ENCODE measurements at regions of chr1 and their contacts with region 1.

Region 1: DNA sequence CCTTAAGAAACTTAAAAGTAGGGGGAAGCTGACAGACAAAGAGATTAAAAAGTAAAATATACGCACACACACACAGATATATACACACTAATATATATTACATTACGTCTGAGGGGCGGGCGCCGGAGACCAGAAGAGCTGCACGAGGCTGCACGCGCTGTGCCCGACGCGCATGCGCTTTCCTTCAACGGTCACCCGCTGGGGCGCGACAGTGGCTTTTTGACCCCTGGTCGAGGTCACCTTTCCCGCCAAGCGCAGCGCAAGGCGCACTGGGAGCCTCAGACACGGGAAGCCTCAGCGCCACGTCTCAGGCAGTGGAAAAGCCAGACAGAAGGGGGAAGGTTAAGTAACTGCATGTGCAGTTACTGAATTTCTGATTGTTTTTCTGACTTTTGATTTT is at the start of gene HORMAD1:
- DNase-seq: no peak
- H3K4me3 ChIP-seq: no peak within 1 kb of the TSS
- H3K27ac ChIP-seq: no peak within 1 kb of the TSS
- H3K4me1 ChIP-seq: no peaks in the 10 kb centered on the region
- H3K27me3 ChIP-seq: no peaks in the 10 kb centered on the region
- CTCF ChIP-seq: no peak
- total RNA-seq, gene HORMAD1: not detected

Region 2: DNA sequence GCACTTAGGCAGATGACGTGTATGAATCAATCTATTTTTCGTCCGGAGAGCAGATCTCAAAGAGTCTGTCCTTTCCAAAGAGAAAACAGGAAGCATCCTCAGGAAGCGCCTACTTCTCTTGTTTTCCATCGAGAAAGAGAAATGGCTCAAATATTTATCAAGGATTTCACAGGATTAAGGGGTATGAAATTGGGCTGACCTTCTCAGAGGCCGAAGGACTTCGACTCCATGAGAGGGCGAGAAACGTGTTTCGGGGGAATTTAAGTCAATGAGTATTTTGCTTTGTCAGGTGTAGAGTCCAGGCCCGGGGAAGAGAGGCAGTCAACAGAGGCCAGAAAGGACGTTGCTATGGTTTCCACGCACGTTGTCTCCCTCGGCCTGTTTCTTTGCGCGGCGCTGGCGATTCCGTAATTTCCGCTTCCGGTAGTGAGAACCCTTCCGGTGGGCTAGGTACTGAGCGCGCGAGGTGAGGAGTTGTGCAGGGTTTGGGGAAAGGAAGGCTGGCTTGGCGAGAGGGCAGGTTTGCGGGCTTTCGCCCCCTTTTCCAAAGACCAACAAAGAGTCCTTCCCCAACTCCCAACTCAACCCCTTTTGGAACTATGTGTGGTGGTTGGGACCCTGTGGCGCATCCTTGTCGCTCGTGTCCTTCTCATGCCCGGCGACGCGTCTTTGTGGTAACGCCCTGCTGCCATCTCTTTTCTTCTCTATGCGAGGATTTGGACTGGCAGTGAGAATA is 427.1 kb before region 1 on chr1 and contains the start of gene MRPS21:
- CTCF ChIA-PET with region 1: no interaction called
- dilution Hi-C with region 1: no loop called
- in situ Hi-C with region 1: no loop called
- intact Hi-C with region 1: no loop called
- DNase-seq: peak; percentile 82
- H3K4me3 ChIP-seq: peak within 1 kb of the TSS; percentile 76 to 88 (median 81)
- H3K27ac ChIP-seq: peak within 1 kb of the TSS; percentile 95
- H3K4me1 ChIP-seq: peaks cover 4% of the 10 kb centered on the region
- H3K27me3 ChIP-seq: no peaks in the 10 kb centered on the region
- CTCF ChIP-seq: no peak
- total RNA-seq, gene MRPS21: 27.3 to 84.8 TPM

Region 3: GRCh38 chr1:150649441-150650075 is 71.1 kb before region 1 on chr1:
- CTCF ChIA-PET with region 1: no interaction called
- dilution Hi-C with region 1: loop called (anchors 5 kb)
- in situ Hi-C with region 1: no loop called
- intact Hi-C with region 1: no loop called
- DNase-seq: no peak
- H3K4me3 ChIP-seq: no peak overlapping the region
- H3K27ac ChIP-seq: no peak overlapping the region
- H3K4me1 ChIP-seq: no peaks in the 10 kb centered on the region
- H3K27me3 ChIP-seq: no peaks in the 10 kb centered on the region
- CTCF ChIP-seq: no peak

Region 4: DNA sequence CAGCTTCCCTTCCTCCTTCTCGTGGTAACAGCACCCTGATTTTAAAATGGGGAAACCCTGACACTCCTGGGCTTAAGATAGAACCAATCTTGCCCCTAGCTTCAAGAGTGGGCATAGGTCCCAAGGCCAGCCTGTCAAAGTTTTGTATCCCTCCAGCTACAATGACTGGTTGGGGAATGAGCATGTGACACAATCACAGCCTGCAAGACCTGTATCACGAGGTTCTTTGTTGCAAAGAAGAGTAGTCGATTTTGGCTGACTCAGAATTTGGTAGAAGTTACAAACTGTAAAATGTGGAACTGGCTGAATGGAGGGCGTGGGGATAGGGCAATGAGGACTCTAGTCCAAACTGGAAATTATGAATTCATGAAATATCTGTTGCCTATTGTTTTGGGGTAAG is 68.7 kb after region 1 on chr1:
- CTCF ChIA-PET with region 1: no interaction called
- dilution Hi-C with region 1: loop called (anchors 5 kb)
- in situ Hi-C with region 1: no loop called
- intact Hi-C with region 1: no loop called
- DNase-seq: peak; percentile 28
- H3K4me3 ChIP-seq: no peak overlapping the region
- H3K27ac ChIP-seq: no peak overlapping the region
- H3K4me1 ChIP-seq: no peaks in the 10 kb centered on the region
- H3K27me3 ChIP-seq: no peaks in the 10 kb centered on the region
- CTCF ChIP-seq: no peak